Activated CD4-positive, alpha-beta memory T cell treated with anti-CD3 and anti-CD28 coated beads for 36 hours (primary cell): ENCODE measurements at regions of chr1 and their contacts with region 1.

Region 1: GRCh38 chr1:48677306-48678287 is 99.1 kb downstream of the BEND5 start:
- DNase-seq: peak; percentile 43
- H3K4me3 Mint-ChIP-seq: no peak overlapping the region
- H3K27ac Mint-ChIP-seq: no peak overlapping the region
- H3K4me1 Mint-ChIP-seq: no peaks in the 10 kb centered on the region
- H3K27me3 Mint-ChIP-seq: peaks cover 10% of the 10 kb centered on the region

Region 2: GRCh38 chr1:48540587-48540986 is 137.0 kb before region 1 on chr1:
- CTCF ChIA-PET with region 1: no interaction called
- POLR2A ChIA-PET with region 1: no interaction called
- intact Hi-C with region 1: no loop called
- DNase-seq: no peak
- H3K4me3 Mint-ChIP-seq: no peak overlapping the region
- H3K27ac Mint-ChIP-seq: no peak overlapping the region
- H3K4me1 Mint-ChIP-seq: no peaks in the 10 kb centered on the region
- H3K27me3 Mint-ChIP-seq: peaks cover 2% of the 10 kb centered on the region

Region 3: GRCh38 chr1:48661726-48662463 is 15.7 kb before region 1 on chr1:
- CTCF ChIA-PET with region 1: interaction called, 10 read pairs
- POLR2A ChIA-PET with region 1: no interaction called
- intact Hi-C with region 1: no loop called
- DNase-seq: no peak
- H3K4me3 Mint-ChIP-seq: no peak overlapping the region
- H3K27ac Mint-ChIP-seq: no peak overlapping the region
- H3K4me1 Mint-ChIP-seq: no peaks in the 10 kb centered on the region
- H3K27me3 Mint-ChIP-seq: no peaks in the 10 kb centered on the region

Region 4: DNA sequence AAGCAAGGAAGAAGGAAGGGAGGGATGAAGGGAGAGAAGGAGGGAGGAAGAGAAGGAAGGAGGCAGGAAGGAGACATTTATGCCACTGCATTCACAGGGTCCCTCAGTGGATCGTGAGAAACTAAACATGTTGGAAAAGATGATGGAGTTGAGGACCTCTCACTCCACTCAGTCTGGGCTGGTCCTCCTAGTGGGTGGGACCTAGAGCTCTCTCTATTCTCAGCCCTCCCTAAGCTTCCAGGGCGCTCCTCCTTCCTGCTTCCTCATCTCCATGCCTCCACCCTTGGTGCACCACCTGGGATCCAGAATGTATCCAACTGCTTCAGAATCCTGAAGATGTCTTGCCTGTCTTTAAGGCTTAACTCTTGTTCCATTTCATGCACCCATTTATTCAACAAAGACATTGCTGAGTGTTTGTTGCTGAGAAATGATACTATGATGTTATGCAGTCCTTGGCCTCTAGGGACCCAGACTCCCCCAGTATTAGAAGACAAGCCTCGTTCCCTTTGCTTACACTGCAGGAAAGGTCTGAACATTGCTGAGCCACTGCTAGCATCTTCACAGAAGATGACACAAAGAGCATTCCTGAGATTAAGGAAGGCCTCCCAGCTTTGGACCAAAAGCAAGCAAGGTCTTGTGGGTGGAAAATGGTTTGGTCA is 10.6 kb after region 1 on chr1:
- CTCF ChIA-PET with region 1: interaction called, 10 read pairs
- POLR2A ChIA-PET with region 1: no interaction called
- intact Hi-C with region 1: no loop called
- DNase-seq: no peak
- H3K4me3 Mint-ChIP-seq: no peak overlapping the region
- H3K27ac Mint-ChIP-seq: no peak overlapping the region
- H3K4me1 Mint-ChIP-seq: no peaks in the 10 kb centered on the region
- H3K27me3 Mint-ChIP-seq: peaks cover 2% of the 10 kb centered on the region

Region 5: GRCh38 chr1:48697066-48697707 is 19.6 kb after region 1 on chr1:
- CTCF ChIA-PET with region 1: interaction called, 14 read pairs
- POLR2A ChIA-PET with region 1: no interaction called
- intact Hi-C with region 1: no loop called
- DNase-seq: peak; percentile 69
- H3K4me3 Mint-ChIP-seq: no peak overlapping the region
- H3K27ac Mint-ChIP-seq: no peak overlapping the region
- H3K4me1 Mint-ChIP-seq: no peaks in the 10 kb centered on the region
- H3K27me3 Mint-ChIP-seq: peaks cover 10% of the 10 kb centered on the region

Region 6: GRCh38 chr1:50332941-50333594 is 1655.5 kb after region 1 on chr1:
- CTCF ChIA-PET with region 1: interaction called, 9 read pairs
- POLR2A ChIA-PET with region 1: no interaction called
- intact Hi-C with region 1: loop called (anchors 5 kb)
- DNase-seq: peak; percentile 61
- H3K4me3 Mint-ChIP-seq: peak overlapping the region; percentile 41
- H3K27ac Mint-ChIP-seq: no peak overlapping the region
- H3K4me1 Mint-ChIP-seq: peaks cover 3% of the 10 kb centered on the region
- H3K27me3 Mint-ChIP-seq: peaks cover 37% of the 10 kb centered on the region

Region 7: GRCh38 chr1:50348449-50349241 is 1671.0 kb after region 1 on chr1:
- CTCF ChIA-PET with region 1: interaction called, 8 read pairs
- POLR2A ChIA-PET with region 1: no interaction called
- intact Hi-C with region 1: loop called (anchors 5 kb)
- DNase-seq: peak; percentile 38
- H3K4me3 Mint-ChIP-seq: no peak overlapping the region
- H3K27ac Mint-ChIP-seq: no peak overlapping the region
- H3K4me1 Mint-ChIP-seq: no peaks in the 10 kb centered on the region
- H3K27me3 Mint-ChIP-seq: peaks cover 16% of the 10 kb centered on the region